ENCODE measurements at regions of chr3 and their contacts with region 1.

Region 1: GRCh38 chr3:145450018-145450682 is 710.8 kb downstream of the PLOD2 start:
- DNase-seq: no peak
- H3K4me3 ChIP-seq: no peak overlapping the region
- H3K27ac ChIP-seq: no peak overlapping the region
- H3K4me1 ChIP-seq: no peaks in the 10 kb centered on the region
- H3K27me3 ChIP-seq: no peaks in the 10 kb centered on the region
- CTCF ChIP-seq: no peak
- EP300 ChIP-seq: no peak
- POLR2A ChIP-seq: no peak

Region 2: GRCh38 chr3:145798692-145799537 is 348.8 kb after region 1 on chr3:
- intact Hi-C with region 1: no loop called
- DNase-seq: no peak
- H3K4me3 ChIP-seq: no peak overlapping the region
- H3K27ac ChIP-seq: no peak overlapping the region
- H3K4me1 ChIP-seq: no peaks in the 10 kb centered on the region
- H3K27me3 ChIP-seq: no peaks in the 10 kb centered on the region
- CTCF ChIP-seq: no peak
- EP300 ChIP-seq: no peak
- POLR2A ChIP-seq: no peak

Region 3: GRCh38 chr3:147237991-147238390 is 1787.8 kb after region 1 on chr3:
- intact Hi-C with region 1: loop called in 1 of 4 experiments (anchors 5 kb)
- DNase-seq: no peak
- H3K4me3 ChIP-seq: no peak overlapping the region
- H3K27ac ChIP-seq: no peak overlapping the region
- H3K4me1 ChIP-seq: no peaks in the 10 kb centered on the region
- H3K27me3 ChIP-seq: no peaks in the 10 kb centered on the region
- CTCF ChIP-seq: no peak
- EP300 ChIP-seq: no peak
- POLR2A ChIP-seq: no peak

Measured in ovary (tissue), 10 donors.